ENCODE measurements at regions of chr1 and their contacts with region 1.

Region 1: DNA sequence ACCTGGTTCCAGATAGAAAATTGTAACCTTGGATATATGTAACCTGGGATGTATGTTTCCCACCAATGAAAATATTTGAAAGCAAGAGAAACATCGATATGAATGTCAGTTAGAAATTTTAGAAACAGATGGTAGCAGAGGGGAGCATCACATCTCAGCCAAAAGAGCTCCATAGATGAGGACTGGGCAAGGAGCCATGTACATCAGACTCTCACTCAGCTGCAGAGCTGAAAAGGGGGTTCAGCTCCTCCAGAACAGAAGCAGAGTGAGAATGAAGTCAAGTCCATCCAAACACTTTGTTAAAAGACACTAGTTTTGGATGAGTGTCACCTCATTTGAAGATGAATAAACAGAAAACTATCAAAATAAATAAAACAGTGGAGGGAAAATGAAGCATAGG is 202.4 kb downstream of the HMCN1 start:
- DNase-seq: no peak
- H3K4me3 ChIP-seq: no peak overlapping the region
- H3K27ac ChIP-seq: no peak overlapping the region
- H3K4me1 ChIP-seq: no peaks in the 10 kb centered on the region
- H3K27me3 ChIP-seq: no peaks in the 10 kb centered on the region
- CTCF ChIP-seq: no peak
- EP300 ChIP-seq: no peak
- POLR2A ChIP-seq: no peak

Region 2: DNA sequence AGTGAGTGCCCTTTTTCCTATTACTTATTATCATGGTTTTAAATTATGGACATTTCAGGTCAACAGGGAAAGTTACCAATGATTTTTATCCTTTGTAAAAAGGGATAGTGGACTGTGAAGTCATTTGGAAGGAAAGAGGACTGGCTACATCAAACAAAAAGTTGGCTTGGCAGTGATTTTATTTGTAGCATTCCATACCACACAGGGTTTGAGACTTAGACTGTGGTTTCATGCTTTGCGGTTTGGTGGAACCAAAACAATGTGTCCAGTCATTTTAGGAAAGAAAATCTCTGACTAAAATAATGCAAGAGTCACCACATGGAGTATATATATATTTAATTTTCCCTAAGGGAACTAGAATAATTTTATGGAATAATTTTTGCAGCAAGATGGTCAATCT is 37.0 kb after region 1 on chr1:
- intact Hi-C with region 1: loop called in 1 of 4 experiments (anchors 1 kb)
- DNase-seq: no peak
- H3K4me3 ChIP-seq: no peak overlapping the region
- H3K27ac ChIP-seq: no peak overlapping the region
- H3K4me1 ChIP-seq: no peaks in the 10 kb centered on the region
- H3K27me3 ChIP-seq: no peaks in the 10 kb centered on the region
- CTCF ChIP-seq: no peak
- EP300 ChIP-seq: no peak
- POLR2A ChIP-seq: no peak

Region 3: DNA sequence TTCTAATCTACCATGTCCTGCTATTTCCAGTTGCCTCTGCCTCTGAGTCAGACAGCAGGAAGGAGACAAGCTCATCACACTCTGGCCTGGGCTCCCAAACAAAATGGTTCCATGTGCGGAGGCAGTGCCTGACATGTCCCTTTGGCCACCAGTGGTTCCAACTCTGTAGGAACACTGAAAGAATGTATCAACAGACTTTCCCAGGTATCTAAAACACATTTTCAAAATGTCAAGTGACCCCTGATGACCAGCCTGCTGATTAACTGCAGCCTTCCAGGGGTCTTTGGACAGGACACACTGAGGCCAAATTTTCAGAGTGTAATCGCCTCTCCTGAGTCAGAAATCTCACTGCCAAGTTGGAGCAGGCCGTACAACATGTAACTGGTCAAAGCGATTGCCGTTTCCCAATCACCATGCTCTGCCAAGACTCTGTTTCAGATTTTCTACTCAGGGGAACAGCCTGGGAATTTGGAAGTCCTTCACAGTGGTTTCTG is 265.7 kb after region 1 on chr1:
- intact Hi-C with region 1: no loop called
- DNase-seq: peak in 1 of 5 donors; percentile 37
- H3K4me3 ChIP-seq: no peak overlapping the region
- H3K27ac ChIP-seq: no peak overlapping the region
- H3K4me1 ChIP-seq: no peaks in the 10 kb centered on the region
- H3K27me3 ChIP-seq: no peaks in the 10 kb centered on the region
- CTCF ChIP-seq: no peak
- EP300 ChIP-seq: no peak
- POLR2A ChIP-seq: no peak

Measured in ovary (tissue), 10 donors.